ENCODE measurements at regions of chr14 and their contacts with region 1.

Region 1: GRCh38 chr14:62179367-62180018 is 417.3 kb downstream of the SNAPC1 start:
- DNase-seq: peak; percentile 36
- H3K4me3 ChIP-seq: no peak overlapping the region
- H3K27me3 ChIP-seq: no peaks in the 10 kb centered on the region
- CTCF ChIP-seq: peak; percentile 68

Region 2: DNA sequence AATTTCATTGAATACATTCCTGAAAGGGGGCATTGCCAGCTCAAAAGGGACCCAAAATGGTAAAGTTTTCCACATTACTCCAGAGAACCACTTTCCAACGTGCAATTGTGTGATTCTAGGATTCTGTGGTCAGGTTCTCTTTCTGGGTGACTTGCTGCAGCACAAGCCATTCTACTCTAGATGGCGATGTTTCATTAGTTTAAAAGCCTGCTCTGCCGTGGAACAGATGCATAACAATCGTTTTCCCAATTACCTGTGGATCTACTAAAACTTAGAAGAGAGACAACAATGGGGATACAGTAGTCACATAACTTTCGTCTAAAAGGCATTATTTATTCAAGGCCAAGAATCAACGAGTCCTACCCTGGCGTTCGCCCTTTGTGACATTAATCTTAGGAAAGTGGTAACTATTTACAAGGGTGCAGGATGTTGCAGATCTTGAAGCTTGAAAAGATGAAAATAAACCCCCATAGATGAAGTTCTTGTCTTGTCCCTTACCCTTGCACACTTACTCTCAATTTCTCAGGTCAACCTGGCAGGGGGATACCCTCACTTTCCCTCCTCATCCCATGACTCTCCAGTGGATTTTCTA is 16.4 kb before region 1 on chr14:
- CTCF ChIA-PET with region 1: interaction called, 10 read pairs
- POLR2A ChIA-PET with region 1: no interaction called
- DNase-seq: no peak
- H3K4me3 ChIP-seq: no peak overlapping the region
- H3K27me3 ChIP-seq: no peaks in the 10 kb centered on the region
- CTCF ChIP-seq: peak; percentile 85

Measured in BJ (cell line).